Mammary epithelial cell (primary cell): ENCODE measurements at regions of chr7 and their contacts with region 1.

Region 1: DNA sequence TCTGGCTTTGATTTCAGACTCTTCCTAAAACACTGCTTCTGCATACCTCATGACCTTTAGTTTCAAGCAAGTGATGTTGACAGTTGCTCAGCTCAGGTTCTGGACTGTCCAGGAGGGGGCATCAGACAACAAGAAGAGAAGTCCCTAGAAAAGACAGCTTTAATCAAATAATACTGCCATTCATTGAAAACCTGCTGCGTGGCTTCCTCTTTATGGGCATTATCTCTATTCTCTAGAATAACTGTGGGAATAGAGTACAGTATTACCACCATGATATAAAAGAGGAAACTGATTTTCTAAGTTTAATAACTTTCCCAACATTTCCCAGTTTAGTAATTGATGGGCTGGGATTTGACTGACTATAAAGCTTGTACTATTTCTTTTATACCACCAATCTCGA is 170.4 kb downstream of the SNX13 start:
- DNase-seq: peak; percentile 58
- H3K4me3 ChIP-seq: no peak overlapping the region
- H3K27ac ChIP-seq: no peak overlapping the region
- H3K4me1 ChIP-seq: peaks cover 42% of the 10 kb centered on the region
- H3K27me3 ChIP-seq: no peaks in the 10 kb centered on the region
- CTCF ChIP-seq: peak; percentile 82 to 96

Region 2: GRCh38 chr7:17725796-17726195 is 44.1 kb before region 1 on chr7:
- CTCF ChIA-PET with region 1: no interaction called
- dilution Hi-C with region 1: no loop called
- in situ Hi-C with region 1: no loop called
- intact Hi-C with region 1: no loop called
- DNase-seq: no peak
- H3K4me3 ChIP-seq: no peak overlapping the region
- H3K27ac ChIP-seq: no peak overlapping the region
- H3K4me1 ChIP-seq: no peaks in the 10 kb centered on the region
- H3K27me3 ChIP-seq: no peaks in the 10 kb centered on the region
- CTCF ChIP-seq: no peak

Region 3: DNA sequence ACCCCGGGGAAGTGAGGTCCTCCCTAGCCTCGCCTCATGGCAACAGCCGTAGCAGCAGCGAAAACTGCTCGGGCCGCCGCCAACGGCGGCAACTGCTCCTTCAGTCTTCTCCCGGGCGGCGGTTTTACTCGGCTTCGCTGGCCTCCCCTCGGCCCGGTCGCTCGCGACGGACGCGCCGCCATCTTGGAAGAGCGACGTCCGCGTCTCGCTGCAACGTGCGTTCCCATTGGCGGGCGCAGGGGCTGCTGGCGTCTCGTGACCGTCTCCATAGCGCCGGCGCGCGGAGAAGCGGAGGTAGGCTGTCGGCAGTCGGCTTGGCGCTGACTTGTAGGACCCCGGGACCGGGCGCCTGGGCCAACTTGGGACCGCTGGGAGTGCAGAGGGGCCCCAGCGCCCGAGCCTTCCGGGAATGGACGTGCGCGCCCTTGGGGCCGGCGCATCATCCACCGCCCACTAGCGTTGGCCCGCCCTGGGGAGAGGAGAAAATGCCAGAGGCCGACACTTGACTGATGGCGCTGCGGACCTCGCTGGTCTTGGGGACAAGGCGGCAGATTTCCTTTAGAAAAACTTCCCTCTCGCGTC is 170.5 kb after region 1 on chr7 and contains the start of gene SNX13:
- CTCF ChIA-PET with region 1: interaction called, 10 read pairs
- dilution Hi-C with region 1: no loop called
- in situ Hi-C with region 1: no loop called
- intact Hi-C with region 1: loop called (anchors 2 kb)
- DNase-seq: peak; percentile 86
- H3K4me3 ChIP-seq: peak within 1 kb of the TSS; percentile 62 to 77 (median 74)
- H3K27ac ChIP-seq: peak within 1 kb of the TSS; percentile 77
- H3K4me1 ChIP-seq: peaks cover 8% of the 10 kb centered on the region
- H3K27me3 ChIP-seq: no peaks in the 10 kb centered on the region
- CTCF ChIP-seq: peak in 1 of 2 donors; percentile 33
- total RNA-seq, gene SNX13: 35.5 to 62.8 TPM

Region 4: GRCh38 chr7:18119985-18120384 is 350.1 kb after region 1 on chr7:
- CTCF ChIA-PET with region 1: no interaction called
- dilution Hi-C with region 1: no loop called
- in situ Hi-C with region 1: no loop called
- intact Hi-C with region 1: loop called (anchors 1 kb)
- DNase-seq: no peak
- H3K4me3 ChIP-seq: no peak overlapping the region
- H3K27ac ChIP-seq: no peak overlapping the region
- H3K4me1 ChIP-seq: no peaks in the 10 kb centered on the region
- H3K27me3 ChIP-seq: no peaks in the 10 kb centered on the region
- CTCF ChIP-seq: peak; percentile 21 to 44

Region 5: DNA sequence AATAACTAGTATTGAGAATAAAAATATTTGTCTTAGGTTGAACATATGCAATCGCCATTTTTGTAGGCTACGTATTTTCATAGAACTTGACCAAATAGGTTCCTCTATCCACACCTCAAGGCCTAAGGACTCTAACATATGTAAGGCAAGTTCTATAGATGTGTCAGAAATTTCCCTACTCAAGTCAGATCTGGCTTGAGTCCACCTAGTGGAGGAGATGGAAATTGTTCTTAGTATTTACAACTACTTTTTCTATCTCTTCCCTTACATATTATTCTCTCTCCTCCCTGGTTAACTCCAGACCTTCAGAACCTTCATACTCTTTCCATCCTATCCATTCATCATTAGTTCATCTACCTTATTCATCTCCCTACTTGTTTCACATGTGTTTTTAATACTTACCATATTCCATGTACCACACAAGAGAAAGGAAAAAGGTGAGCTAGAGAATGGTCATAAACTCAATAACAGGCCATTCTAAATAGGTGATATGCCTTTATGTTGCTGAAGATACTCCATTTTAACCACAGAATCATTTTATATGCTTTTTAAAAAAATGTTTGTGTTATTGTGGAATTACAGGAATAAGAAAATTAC is 551.2 kb after region 1 on chr7:
- CTCF ChIA-PET with region 1: no interaction called
- dilution Hi-C with region 1: no loop called
- in situ Hi-C with region 1: loop called in 1 of 2 experiments (anchors 25 kb)
- intact Hi-C with region 1: loop called (anchors 1 kb)
- DNase-seq: peak; percentile 29
- H3K4me3 ChIP-seq: no peak overlapping the region
- H3K27ac ChIP-seq: no peak overlapping the region
- H3K4me1 ChIP-seq: no peaks in the 10 kb centered on the region
- H3K27me3 ChIP-seq: no peaks in the 10 kb centered on the region
- CTCF ChIP-seq: peak; percentile 52 to 69